Activated CD4-positive, alpha-beta memory T cell treated with anti-CD3 and anti-CD28 coated beads for 36 hours (primary cell): ENCODE measurements at regions of chr12 and their contacts with region 1.

Region 1: GRCh38 chr12:48542300-48542928 is 17.0 kb downstream of the OR8S1 start:
- DNase-seq: peak; percentile 75
- H3K4me3 Mint-ChIP-seq: no peak overlapping the region
- H3K27ac Mint-ChIP-seq: no peak overlapping the region
- H3K4me1 Mint-ChIP-seq: peaks cover 11% of the 10 kb centered on the region
- H3K27me3 Mint-ChIP-seq: no peaks in the 10 kb centered on the region

Region 2: GRCh38 chr12:48286665-48287064 is 255.7 kb before region 1 on chr12:
- CTCF ChIA-PET with region 1: no interaction called
- POLR2A ChIA-PET with region 1: no interaction called
- intact Hi-C with region 1: no loop called
- DNase-seq: peak; percentile 10
- H3K4me3 Mint-ChIP-seq: no peak overlapping the region
- H3K27ac Mint-ChIP-seq: peak overlapping the region; percentile 23
- H3K4me1 Mint-ChIP-seq: peaks cover 12% of the 10 kb centered on the region
- H3K27me3 Mint-ChIP-seq: no peaks in the 10 kb centered on the region

Region 3: DNA sequence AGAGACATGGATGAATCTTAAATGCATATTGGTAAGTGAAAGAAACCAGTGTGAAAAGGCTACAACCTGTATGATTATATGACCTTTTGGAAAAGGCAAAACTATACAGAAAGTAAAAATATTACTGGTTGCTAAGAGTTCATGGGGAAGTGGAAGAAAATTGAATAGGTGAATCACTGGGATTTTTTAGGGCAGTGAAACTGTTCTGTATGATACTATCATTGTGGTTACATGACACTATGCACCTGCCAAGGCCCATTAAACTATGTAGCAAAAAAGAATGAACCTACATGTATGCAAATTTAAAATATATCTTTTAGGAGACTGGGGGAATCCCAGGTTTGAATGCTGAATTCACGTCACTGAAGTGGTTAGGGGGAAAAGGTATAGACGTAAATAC is 29.6 kb before region 1 on chr12:
- CTCF ChIA-PET with region 1: no interaction called
- POLR2A ChIA-PET with region 1: no interaction called
- intact Hi-C with region 1: loop called (anchors 1 kb)
- DNase-seq: no peak
- H3K4me3 Mint-ChIP-seq: no peak overlapping the region
- H3K27ac Mint-ChIP-seq: no peak overlapping the region
- H3K4me1 Mint-ChIP-seq: peaks cover 7% of the 10 kb centered on the region
- H3K27me3 Mint-ChIP-seq: peaks cover 1% of the 10 kb centered on the region